ENCODE measurements at regions of chr1 and their contacts with region 1.

Region 1: DNA sequence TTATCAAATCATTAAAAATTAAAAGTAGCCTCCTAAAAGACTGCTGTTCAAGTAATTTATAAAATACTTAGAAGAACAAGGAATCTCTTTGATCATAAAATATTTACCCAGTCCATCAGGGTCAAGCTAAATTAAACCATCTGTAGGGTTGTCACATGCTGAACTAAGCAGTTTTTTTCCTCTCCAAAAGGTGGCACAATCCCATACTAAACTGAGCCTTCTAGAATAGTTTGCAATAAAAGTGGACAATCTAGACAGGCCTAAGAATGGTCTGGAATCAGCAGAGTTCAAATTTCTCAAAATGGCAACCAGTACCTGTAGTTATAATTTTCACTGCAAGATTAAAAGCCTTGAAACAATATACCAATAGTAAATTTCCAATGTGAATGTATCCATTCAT is 194.8 kb downstream of the EIF4G3 start:
- DNase-seq: peak; percentile 28
- ATAC-seq: peak; percentile 54
- H3K4me3 ChIP-seq: no peak overlapping the region
- H3K27ac ChIP-seq: no peak overlapping the region
- H3K4me1 ChIP-seq: no peaks in the 10 kb centered on the region
- H3K27me3 ChIP-seq: no peaks in the 10 kb centered on the region
- CTCF ChIP-seq: peak; percentile 58
- EP300 ChIP-seq: no peak
- POLR2A ChIP-seq: no peak
- RAD21 ChIP-seq: 0 out of 2 replicates have a peak, but pooled peaks have one; percentile 25

Region 2: GRCh38 chr1:20956272-20956671 is 25.6 kb before region 1 on chr1:
- CTCF ChIA-PET with region 1: no interaction called
- POLR2A ChIA-PET with region 1: no interaction called
- in situ Hi-C with region 1: no loop called
- intact Hi-C with region 1: no loop called
- DNase-seq: no peak
- ATAC-seq: no peak
- H3K4me3 ChIP-seq: no peak overlapping the region
- H3K27ac ChIP-seq: no peak overlapping the region
- H3K4me1 ChIP-seq: no peaks in the 10 kb centered on the region
- H3K27me3 ChIP-seq: no peaks in the 10 kb centered on the region
- CTCF ChIP-seq: no peak
- EP300 ChIP-seq: no peak
- POLR2A ChIP-seq: no peak
- RAD21 ChIP-seq: no peak

Region 3: GRCh38 chr1:21176586-21177555 is 195.0 kb after region 1 on chr1 and contains the start of gene EIF4G3:
- CTCF ChIA-PET with region 1: no interaction called
- POLR2A ChIA-PET with region 1: no interaction called
- in situ Hi-C with region 1: loop called (anchors 25 kb)
- intact Hi-C with region 1: no loop called
- DNase-seq: peak; percentile 94
- ATAC-seq: peak; percentile 95
- H3K4me3 ChIP-seq: peak within 1 kb of the TSS; percentile 90 to 95 (median 91)
- H3K27ac ChIP-seq: peak within 1 kb of the TSS; percentile 77
- H3K4me1 ChIP-seq: peaks cover 34% of the 10 kb centered on the region
- H3K27me3 ChIP-seq: no peaks in the 10 kb centered on the region; a peak in 1 of 5 replicates
- CTCF ChIP-seq: no peak
- EP300 ChIP-seq: no peak
- POLR2A ChIP-seq: peak; percentile 81 to 90
- RAD21 ChIP-seq: peak; percentile 50; the same call in 1 of the 2 replicates
- total RNA-seq, gene EIF4G3: 22.2 and 29.0 TPM in 2 replicates

Region 4: DNA sequence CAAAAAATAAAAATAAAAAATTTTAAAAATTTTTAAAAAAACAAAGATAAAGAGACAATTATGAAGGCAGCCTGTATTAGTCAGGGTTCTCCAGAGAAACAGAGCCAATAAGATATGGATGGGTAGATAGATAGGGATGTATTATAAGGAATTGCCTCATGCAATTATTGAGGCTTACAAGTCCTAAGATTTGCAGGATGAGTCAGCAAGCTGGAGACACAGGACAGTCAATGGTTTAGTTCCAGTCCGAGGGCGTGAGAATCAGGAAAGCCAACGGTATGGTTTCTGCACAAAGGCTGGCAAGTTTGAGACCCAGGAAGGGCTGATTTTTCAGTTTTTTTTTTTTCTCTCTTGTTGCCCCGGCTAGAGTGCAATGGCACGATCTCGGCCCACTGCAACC is 218.9 kb after region 1 on chr1:
- CTCF ChIA-PET with region 1: no interaction called
- POLR2A ChIA-PET with region 1: no interaction called
- in situ Hi-C with region 1: loop called (anchors 25 kb)
- intact Hi-C with region 1: loop called (anchors 2 kb)
- DNase-seq: no peak
- ATAC-seq: no peak
- H3K4me3 ChIP-seq: no peak overlapping the region
- H3K27ac ChIP-seq: no peak overlapping the region
- H3K4me1 ChIP-seq: no peaks in the 10 kb centered on the region
- H3K27me3 ChIP-seq: no peaks in the 10 kb centered on the region; a peak in 1 of 5 replicates
- CTCF ChIP-seq: no peak
- EP300 ChIP-seq: no peak
- POLR2A ChIP-seq: no peak
- RAD21 ChIP-seq: no peak

Measured in HepG2 (cell line).